Heart right ventricle (tissue), 16 donors: ENCODE measurements at regions of chr5 and their contacts with region 1.

Region 1: DNA sequence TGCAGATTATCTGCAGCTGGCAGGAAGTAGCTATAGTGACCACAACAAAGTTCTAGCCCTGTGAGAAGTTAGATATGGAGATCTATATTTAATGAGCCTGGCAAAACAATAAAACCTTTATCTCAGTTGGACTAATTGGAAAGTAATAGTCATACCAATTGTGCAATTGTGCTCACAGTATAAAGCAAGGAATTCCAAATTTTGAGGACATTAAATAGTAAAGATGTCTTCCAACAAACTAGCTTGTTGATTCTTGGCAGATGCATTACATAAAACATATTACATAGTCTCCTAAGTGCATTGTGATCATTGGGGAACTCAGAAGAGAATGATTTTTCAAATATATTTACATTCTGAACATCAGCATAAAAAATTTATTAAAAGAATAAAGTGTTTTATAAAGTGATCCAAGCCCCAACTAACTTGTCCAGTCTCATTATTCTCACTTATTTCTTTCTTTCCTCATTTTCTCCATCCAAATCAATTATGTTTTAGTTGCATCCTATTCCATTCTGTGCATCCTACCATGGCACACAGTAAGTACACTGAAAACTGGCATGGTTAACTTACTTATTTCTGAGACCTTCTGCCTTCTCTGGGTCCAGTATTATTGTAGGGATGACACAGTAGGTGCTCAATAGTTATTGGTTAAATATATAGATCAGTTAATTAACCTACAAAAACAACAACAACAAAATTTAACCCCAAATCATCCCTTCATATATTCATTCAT is 977.2 kb upstream of the NUDT12 start:
- DNase-seq: no peak
- ATAC-seq: no peak
- H3K4me3 ChIP-seq: no peak overlapping the region
- H3K27ac ChIP-seq: no peak overlapping the region
- H3K4me1 ChIP-seq: no peaks in the 10 kb centered on the region
- H3K27me3 ChIP-seq: no peaks in the 10 kb centered on the region
- CTCF ChIP-seq: no peak

Region 2: DNA sequence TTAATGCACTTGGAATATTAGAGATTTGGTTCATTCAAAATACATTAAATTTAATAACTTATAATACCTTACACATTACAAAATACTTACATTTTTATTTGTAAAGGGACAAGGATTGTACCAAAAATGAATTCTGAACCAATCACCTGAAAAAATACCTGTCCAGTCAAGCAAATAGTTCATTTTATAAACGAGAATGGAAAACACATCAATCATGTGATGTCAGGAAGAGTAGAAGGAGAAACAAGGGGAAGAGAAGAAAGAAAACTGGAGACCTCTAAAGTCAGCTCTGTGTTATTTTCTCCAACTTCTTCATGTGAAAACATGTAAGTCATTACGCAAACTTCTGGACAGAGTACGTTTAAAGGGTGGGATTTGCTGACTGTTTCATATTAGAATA is 11.8 kb after region 1 on chr5:
- intact Hi-C with region 1: loop called in 1 of 10 experiments (anchors 1 kb)
- DNase-seq: no peak
- ATAC-seq: no peak
- H3K4me3 ChIP-seq: no peak overlapping the region
- H3K27ac ChIP-seq: no peak overlapping the region
- H3K4me1 ChIP-seq: no peaks in the 10 kb centered on the region
- H3K27me3 ChIP-seq: no peaks in the 10 kb centered on the region
- CTCF ChIP-seq: no peak